ENCODE measurements at regions of chrX and their contacts with region 1.

Region 1: DNA sequence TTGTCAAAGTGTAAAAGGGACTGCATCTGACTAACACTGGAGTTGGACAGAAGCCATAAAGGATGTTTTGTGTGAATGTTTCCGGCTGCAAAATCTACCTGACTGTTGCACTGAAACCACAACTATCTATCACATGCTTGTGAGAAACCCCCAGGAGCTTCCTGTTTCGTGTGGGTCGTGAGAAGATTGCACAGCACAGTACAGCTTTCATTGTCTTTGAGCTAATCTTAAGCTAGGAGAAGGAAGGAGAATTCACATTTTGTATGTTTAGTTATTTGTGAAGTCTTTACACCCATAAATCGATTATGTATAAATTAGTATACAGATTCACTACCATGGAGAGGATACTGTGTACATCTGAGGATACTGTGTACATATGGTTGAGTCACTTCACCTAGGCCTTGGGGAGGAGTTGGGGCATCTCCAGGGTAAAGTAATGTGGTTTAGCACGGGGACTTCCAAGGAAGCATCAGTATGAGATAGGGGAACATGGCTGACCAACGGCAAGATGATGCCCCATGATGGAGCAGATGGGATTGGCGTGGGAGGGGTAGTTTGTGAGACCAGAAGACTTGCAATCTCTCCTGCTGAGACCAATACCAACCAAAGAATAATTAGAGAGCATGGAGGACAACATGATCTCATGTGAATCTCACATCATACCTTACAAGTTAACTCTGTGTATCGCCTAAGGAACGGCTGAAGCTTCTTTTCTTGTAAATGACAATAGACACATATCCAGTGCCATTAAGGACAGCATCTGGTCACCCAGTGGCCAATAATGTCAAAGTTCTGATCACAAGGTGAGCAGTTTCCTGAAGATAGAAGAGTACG is 43.1 kb upstream of the FAM9C start:
- DNase-seq: peak in 8 of 9 donors; percentile 54 to 94 (median 88)
- ATAC-seq: peak; percentile 77
- H3K4me3 ChIP-seq: peak overlapping the region; percentile 70
- H3K4me3 Mint-ChIP-seq: peak overlapping the region; percentile 72 to 89 (median 82)
- H3K27ac ChIP-seq: peak overlapping the region; percentile 88
- H3K27ac Mint-ChIP-seq: peak overlapping the region; percentile 94 to 99 (median 98)
- H3K4me1 ChIP-seq: peaks cover 79 to 81% of the 10 kb centered on the region in 2 donors
- H3K4me1 Mint-ChIP-seq: peaks cover 15 to 99% (median 86%) of the 10 kb centered on the region in 7 donors
- H3K27me3 ChIP-seq: no peaks in the 10 kb centered on the region
- H3K27me3 Mint-ChIP-seq: no peaks in the 10 kb centered on the region

Region 2: GRCh38 chrX:12814420-12814819 is 273.1 kb before region 1 on chrX:
- CTCF ChIA-PET with region 1: no interaction called
- POLR2A ChIA-PET with region 1: no interaction called
- intact Hi-C with region 1: loop called in 1 of 2 experiments (anchors 10 kb)
- DNase-seq: peak; percentile 8 to 59 (median 33)
- ATAC-seq: peak; percentile 67
- H3K4me3 ChIP-seq: no peak overlapping the region
- H3K4me3 Mint-ChIP-seq: no peak overlapping the region
- H3K27ac ChIP-seq: no peak overlapping the region
- H3K27ac Mint-ChIP-seq: peak overlapping the region in 2 of 9 donors; percentile 45 to 48
- H3K4me1 ChIP-seq: no peaks in the 10 kb centered on the region
- H3K4me1 Mint-ChIP-seq: peaks cover 0 to 38% (median 0%) of the 10 kb centered on the region in 7 donors
- H3K27me3 ChIP-seq: no peaks in the 10 kb centered on the region
- H3K27me3 Mint-ChIP-seq: no peaks in the 10 kb centered on the region

Region 3: GRCh38 chrX:12994276-12994675 is 93.3 kb before region 1 on chrX:
- CTCF ChIA-PET with region 1: interaction called, 4 read pairs
- POLR2A ChIA-PET with region 1: interaction called, 434 read pairs
- intact Hi-C with region 1: no loop called
- DNase-seq: no peak
- ATAC-seq: no peak
- H3K4me3 ChIP-seq: no peak overlapping the region
- H3K4me3 Mint-ChIP-seq: no peak overlapping the region
- H3K27ac ChIP-seq: no peak overlapping the region
- H3K27ac Mint-ChIP-seq: peak overlapping the region in 3 of 9 donors; percentile 20 to 79 (median 60)
- H3K4me1 ChIP-seq: peaks cover 25 to 59% of the 10 kb centered on the region in 2 donors
- H3K4me1 Mint-ChIP-seq: peaks cover 10 to 85% (median 68%) of the 10 kb centered on the region in 7 donors
- H3K27me3 ChIP-seq: no peaks in the 10 kb centered on the region
- H3K27me3 Mint-ChIP-seq: no peaks in the 10 kb centered on the region

Region 4: DNA sequence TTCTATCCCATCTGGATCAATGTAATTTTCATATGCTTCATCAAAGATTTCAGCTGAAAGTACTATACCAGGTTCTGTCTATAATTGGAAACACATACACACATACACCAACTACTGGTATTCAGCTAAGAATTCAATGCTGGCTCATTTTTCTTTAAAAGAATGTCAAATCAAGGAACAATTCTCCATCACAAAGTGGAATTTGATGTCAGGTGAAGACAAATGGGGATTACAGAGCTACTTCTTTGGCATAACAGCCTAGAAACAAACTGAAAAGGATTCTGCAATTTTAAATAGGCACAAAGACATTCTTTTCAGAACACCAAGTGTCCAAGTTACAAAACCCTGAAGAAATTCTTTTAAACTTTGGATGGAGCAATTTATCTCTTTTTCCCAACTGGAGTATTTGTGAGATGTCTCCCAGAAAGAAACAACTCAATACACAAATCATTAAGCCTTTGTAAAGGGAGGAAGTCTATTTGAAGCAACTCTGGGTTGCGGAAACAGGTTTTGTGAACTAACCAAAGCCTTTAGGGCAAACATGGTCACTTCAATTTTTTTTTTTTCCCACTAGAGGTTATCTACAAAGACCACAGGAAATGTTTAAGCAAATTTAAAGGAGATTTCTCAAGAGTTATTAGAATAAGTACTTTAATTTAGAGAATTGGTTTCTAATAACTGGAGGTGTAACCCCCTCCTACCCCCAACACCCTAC is 41.2 kb before region 1 on chrX:
- CTCF ChIA-PET with region 1: interaction called, 14 read pairs
- POLR2A ChIA-PET with region 1: interaction called, 353 read pairs
- intact Hi-C with region 1: loop called (anchors 1 to 2 kb)
- DNase-seq: no peak
- ATAC-seq: no peak
- H3K4me3 ChIP-seq: no peak overlapping the region
- H3K4me3 Mint-ChIP-seq: peak overlapping the region in 5 of 10 donors; percentile 3 to 58 (median 23)
- H3K27ac ChIP-seq: no peak overlapping the region
- H3K27ac Mint-ChIP-seq: peak overlapping the region in 8 of 9 donors; percentile 20 to 89 (median 60)
- H3K4me1 ChIP-seq: peaks cover 20 to 60% of the 10 kb centered on the region in 2 donors
- H3K4me1 Mint-ChIP-seq: peaks cover 6 to 71% (median 61%) of the 10 kb centered on the region in 7 donors
- H3K27me3 ChIP-seq: no peaks in the 10 kb centered on the region
- H3K27me3 Mint-ChIP-seq: no peaks in the 10 kb centered on the region

Region 5: DNA sequence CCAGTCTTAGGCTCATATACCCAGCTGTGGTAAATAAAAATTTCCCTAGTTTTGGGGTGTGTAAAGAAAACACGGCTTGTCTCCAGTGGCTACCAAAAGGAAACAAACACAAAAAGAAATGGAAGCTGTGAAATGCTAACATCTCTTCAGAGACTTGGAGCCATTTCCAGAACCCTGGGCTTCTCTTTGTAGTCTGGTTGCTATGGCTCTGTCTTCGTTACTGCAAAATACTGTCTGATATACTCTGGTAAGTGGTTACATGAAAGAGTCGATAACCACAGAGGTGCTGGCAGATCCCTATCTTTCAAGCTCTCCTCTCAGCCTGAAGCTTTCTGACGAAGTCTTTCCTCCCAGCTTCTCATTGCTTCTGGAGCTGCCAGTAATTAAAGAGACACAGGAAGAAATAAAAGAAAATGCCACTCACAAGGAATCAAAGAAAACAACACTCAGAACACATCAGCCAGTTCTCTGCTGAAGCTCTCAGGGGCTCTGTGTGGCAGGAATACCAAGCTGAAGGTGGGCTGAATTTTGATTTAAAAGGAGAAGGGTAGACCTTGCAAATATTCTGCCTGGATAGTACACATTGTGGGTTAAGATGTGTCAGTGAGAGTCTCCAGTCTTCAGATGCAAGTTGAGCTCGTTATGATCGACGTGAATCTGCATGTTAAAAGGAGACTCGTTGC is 64.4 kb after region 1 on chrX:
- CTCF ChIA-PET with region 1: no interaction called
- POLR2A ChIA-PET with region 1: no interaction called
- intact Hi-C with region 1: loop called (anchors 1 kb)
- DNase-seq: peak in 7 of 9 donors; percentile 51 to 82 (median 80)
- ATAC-seq: peak; percentile 96
- H3K4me3 ChIP-seq: no peak overlapping the region
- H3K4me3 Mint-ChIP-seq: peak overlapping the region; percentile 46 to 77 (median 68)
- H3K27ac ChIP-seq: peak overlapping the region; percentile 55
- H3K27ac Mint-ChIP-seq: peak overlapping the region; percentile 78 to 94 (median 85)
- H3K4me1 ChIP-seq: peaks cover 7 to 8% of the 10 kb centered on the region in 2 donors
- H3K4me1 Mint-ChIP-seq: peaks cover 0 to 31% (median 18%) of the 10 kb centered on the region in 7 donors
- H3K27me3 ChIP-seq: no peaks in the 10 kb centered on the region
- H3K27me3 Mint-ChIP-seq: no peaks in the 10 kb centered on the region

Region 6: GRCh38 chrX:13473442-13474163 is 386.1 kb after region 1 on chrX:
- CTCF ChIA-PET with region 1: no interaction called
- POLR2A ChIA-PET with region 1: interaction called, 4 read pairs
- intact Hi-C with region 1: loop called in 1 of 2 experiments (anchors 5 kb)
- DNase-seq: peak in 7 of 9 donors; percentile 16 to 41 (median 36)
- ATAC-seq: peak; percentile 47
- H3K4me3 ChIP-seq: peak overlapping the region; percentile 44
- H3K4me3 Mint-ChIP-seq: peak overlapping the region; percentile 73 to 87 (median 78)
- H3K27ac ChIP-seq: peak overlapping the region; percentile 63
- H3K27ac Mint-ChIP-seq: peak overlapping the region; percentile 89 to 99 (median 95)
- H3K4me1 ChIP-seq: peaks cover 4 to 7% of the 10 kb centered on the region in 2 donors
- H3K4me1 Mint-ChIP-seq: peaks cover 10 to 35% (median 25%) of the 10 kb centered on the region in 7 donors
- H3K27me3 ChIP-seq: no peaks in the 10 kb centered on the region
- H3K27me3 Mint-ChIP-seq: no peaks in the 10 kb centered on the region

Region 7: GRCh38 chrX:14029425-14030173 is 942.1 kb after region 1 on chrX and contains the start of gene GEMIN8:
- CTCF ChIA-PET with region 1: no interaction called
- POLR2A ChIA-PET with region 1: no interaction called
- intact Hi-C with region 1: loop called (anchors 5 to 10 kb)
- DNase-seq: peak; percentile 72 to 93 (median 87)
- ATAC-seq: peak; percentile 97
- H3K4me3 ChIP-seq: peak within 1 kb of the TSS; percentile 60
- H3K4me3 Mint-ChIP-seq: peak within 1 kb of the TSS; percentile 80 to 100 (median 94)
- H3K27ac ChIP-seq: peak within 1 kb of the TSS; percentile 90
- H3K27ac Mint-ChIP-seq: peak within 1 kb of the TSS; percentile 91 to 100 (median 96)
- H3K4me1 ChIP-seq: peaks cover 19 to 26% of the 10 kb centered on the region in 2 donors
- H3K4me1 Mint-ChIP-seq: peaks cover 9 to 51% (median 41%) of the 10 kb centered on the region in 7 donors
- H3K27me3 ChIP-seq: no peaks in the 10 kb centered on the region
- H3K27me3 Mint-ChIP-seq: peaks cover 0 to 1% (median 0%) of the 10 kb centered on the region in 5 donors
- total RNA-seq, gene GEMIN8: 9.7 to 20.4 (median 11.7) TPM

Measured in naive thymus-derived CD4-positive, alpha-beta T cell (primary cell).